OCI-LY7 (cell line): ENCODE measurements at regions of chr14 and their contacts with region 1.

Region 1: DNA sequence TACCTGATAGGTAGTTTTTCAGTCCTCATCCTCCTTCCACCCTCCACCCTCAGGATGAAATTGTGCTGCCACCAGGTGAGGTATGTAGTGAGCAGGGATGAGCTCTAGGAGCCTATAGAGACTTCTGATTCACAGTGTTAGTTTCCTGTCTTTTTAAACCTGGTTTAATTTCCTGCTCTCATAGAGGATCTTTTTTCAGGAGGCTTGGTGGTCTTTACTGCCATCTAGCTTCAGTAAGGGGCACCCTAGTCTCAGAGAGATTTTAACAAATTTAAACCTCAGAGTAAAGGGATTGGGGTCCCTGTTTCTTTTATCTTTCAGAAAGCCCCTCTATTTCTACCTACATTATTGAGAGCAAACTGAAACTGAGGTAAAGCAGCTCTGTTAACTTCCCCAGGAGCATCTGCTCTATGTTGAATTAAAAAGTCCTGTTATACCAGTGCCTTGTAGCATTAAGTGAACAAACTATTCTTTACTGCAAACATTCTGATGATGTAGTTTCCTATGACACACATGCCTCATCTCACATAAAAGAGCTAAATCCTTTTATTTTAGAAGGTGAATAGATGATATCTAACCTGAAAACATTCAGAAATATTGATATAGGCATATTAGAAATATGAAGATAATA is 172.2 kb upstream of the DDHD1 start:
- DNase-seq: peak; percentile 27
- H3K4me3 ChIP-seq: no peak overlapping the region
- H3K27ac ChIP-seq: no peak overlapping the region
- H3K4me1 ChIP-seq: no peaks in the 10 kb centered on the region
- CTCF ChIP-seq: peak; percentile 74

Region 2: GRCh38 chr14:52422650-52423356 is 902.5 kb before region 1 on chr14:
- CTCF ChIA-PET with region 1: no interaction called
- POLR2A ChIA-PET with region 1: no interaction called
- intact Hi-C with region 1: no loop called
- DNase-seq: no peak
- H3K4me3 ChIP-seq: no peak overlapping the region
- H3K27ac ChIP-seq: no peak overlapping the region
- H3K4me1 ChIP-seq: no peaks in the 10 kb centered on the region
- CTCF ChIP-seq: no peak

Region 3: GRCh38 chr14:52885230-52885629 is 440.1 kb before region 1 on chr14:
- CTCF ChIA-PET with region 1: no interaction called
- POLR2A ChIA-PET with region 1: interaction called, 10 read pairs
- intact Hi-C with region 1: no loop called
- DNase-seq: no peak
- H3K4me3 ChIP-seq: no peak overlapping the region
- H3K27ac ChIP-seq: no peak overlapping the region
- H3K4me1 ChIP-seq: no peaks in the 10 kb centered on the region
- CTCF ChIP-seq: no peak

Region 4: DNA sequence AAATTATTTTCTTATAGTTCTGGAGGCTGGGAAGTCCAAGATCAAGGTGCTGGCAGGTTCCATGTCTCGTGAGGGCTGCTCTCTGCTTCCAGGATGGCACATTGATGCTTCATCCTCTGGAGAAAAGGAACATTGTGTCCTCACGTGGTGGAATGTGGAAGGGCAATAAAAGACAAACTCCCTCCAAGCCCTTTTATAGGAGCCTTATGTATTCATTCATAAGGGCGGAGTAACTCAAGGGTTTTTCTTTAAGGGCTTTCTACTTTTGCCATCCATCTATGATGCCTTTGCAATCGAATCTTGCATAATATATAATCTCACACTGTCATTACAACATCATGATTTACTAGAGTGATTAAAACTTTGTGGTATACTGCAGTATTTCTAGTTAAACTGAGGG is 39.5 kb before region 1 on chr14:
- CTCF ChIA-PET with region 1: no interaction called
- POLR2A ChIA-PET with region 1: no interaction called
- intact Hi-C with region 1: no loop called
- DNase-seq: no peak
- H3K4me3 ChIP-seq: no peak overlapping the region
- H3K27ac ChIP-seq: no peak overlapping the region
- H3K4me1 ChIP-seq: no peaks in the 10 kb centered on the region
- CTCF ChIP-seq: no peak

Region 5: GRCh38 chr14:53295985-53296582 is 29.2 kb before region 1 on chr14:
- CTCF ChIA-PET with region 1: no interaction called
- POLR2A ChIA-PET with region 1: interaction called, 3 read pairs
- intact Hi-C with region 1: loop called (anchors 2 kb)
- DNase-seq: peak; percentile 57
- H3K4me3 ChIP-seq: no peak overlapping the region
- H3K27ac ChIP-seq: no peak overlapping the region
- H3K4me1 ChIP-seq: no peaks in the 10 kb centered on the region
- CTCF ChIP-seq: peak; percentile 93